Breast epithelium (tissue), 4 donors: ENCODE measurements at regions of chr5 and their contacts with region 1.

Region 1: GRCh38 chr5:115180165-115180709 is 10.5 kb upstream of the TRIM36 start:
- DNase-seq: no peak
- H3K4me3 ChIP-seq: peak overlapping the region; percentile 43 to 70 (median 49)
- H3K27ac ChIP-seq: no peak overlapping the region
- H3K4me1 ChIP-seq: peaks cover 0 to 8% of the 10 kb centered on the region in 2 donors
- H3K27me3 ChIP-seq: peaks cover 2 to 61% of the 10 kb centered on the region in 2 donors
- CTCF ChIP-seq: no peak
- POLR2A ChIP-seq: no peak

Region 2: GRCh38 chr5:116557669-116558271 is 1377.5 kb after region 1 on chr5:
- intact Hi-C with region 1: loop called (anchors 10 kb)
- DNase-seq: no peak
- H3K4me3 ChIP-seq: no peak overlapping the region
- H3K27ac ChIP-seq: no peak overlapping the region
- H3K4me1 ChIP-seq: no peaks in the 10 kb centered on the region
- H3K27me3 ChIP-seq: no peaks in the 10 kb centered on the region
- CTCF ChIP-seq: peak; percentile 21 to 37 (median 36)
- POLR2A ChIP-seq: no peak